Esophagus muscularis mucosa (tissue), 4 donors: ENCODE measurements at regions of chr15 and their contacts with region 1.

Region 1: DNA sequence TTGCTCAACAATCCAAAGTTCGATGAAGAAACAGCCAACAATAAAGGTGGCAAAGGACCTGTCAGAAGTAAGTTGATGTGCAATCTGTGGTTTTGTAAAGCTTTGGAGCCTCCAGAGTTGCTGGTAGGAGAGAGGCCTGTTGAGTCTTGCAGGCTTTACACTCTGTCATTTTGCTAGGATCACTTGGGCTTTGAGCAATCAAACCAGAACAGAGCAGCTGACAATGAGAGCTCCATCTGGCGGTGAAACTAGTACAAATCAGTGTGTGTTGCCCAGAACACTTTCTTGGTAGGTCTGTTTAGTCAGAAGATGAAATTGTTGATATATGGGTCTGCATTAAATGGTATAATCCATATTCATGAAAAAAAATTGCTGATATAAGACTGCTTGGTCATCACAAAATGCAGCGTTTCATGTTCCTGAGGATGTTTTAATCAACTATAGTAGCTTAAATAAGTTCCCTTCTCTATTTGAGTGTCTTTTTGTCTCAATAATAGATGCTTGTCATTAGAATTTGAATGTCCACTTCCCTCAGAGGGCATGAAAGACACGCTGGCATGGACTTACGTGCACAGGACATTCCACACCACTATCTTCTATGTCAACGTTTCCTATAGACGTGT is 25.7 kb downstream of the TMOD2 start:
- DNase-seq: peak; percentile 95
- H3K4me3 ChIP-seq: no peak overlapping the region
- H3K27ac ChIP-seq: no peak overlapping the region
- H3K4me1 ChIP-seq: peaks cover 0 to 9% (median 8%) of the 10 kb centered on the region in 4 donors
- H3K27me3 ChIP-seq: no peaks in the 10 kb centered on the region
- CTCF ChIP-seq: peak; percentile 59 to 75 (median 68)
- EP300 ChIP-seq: no peak
- POLR2A ChIP-seq: no peak

Region 2: DNA sequence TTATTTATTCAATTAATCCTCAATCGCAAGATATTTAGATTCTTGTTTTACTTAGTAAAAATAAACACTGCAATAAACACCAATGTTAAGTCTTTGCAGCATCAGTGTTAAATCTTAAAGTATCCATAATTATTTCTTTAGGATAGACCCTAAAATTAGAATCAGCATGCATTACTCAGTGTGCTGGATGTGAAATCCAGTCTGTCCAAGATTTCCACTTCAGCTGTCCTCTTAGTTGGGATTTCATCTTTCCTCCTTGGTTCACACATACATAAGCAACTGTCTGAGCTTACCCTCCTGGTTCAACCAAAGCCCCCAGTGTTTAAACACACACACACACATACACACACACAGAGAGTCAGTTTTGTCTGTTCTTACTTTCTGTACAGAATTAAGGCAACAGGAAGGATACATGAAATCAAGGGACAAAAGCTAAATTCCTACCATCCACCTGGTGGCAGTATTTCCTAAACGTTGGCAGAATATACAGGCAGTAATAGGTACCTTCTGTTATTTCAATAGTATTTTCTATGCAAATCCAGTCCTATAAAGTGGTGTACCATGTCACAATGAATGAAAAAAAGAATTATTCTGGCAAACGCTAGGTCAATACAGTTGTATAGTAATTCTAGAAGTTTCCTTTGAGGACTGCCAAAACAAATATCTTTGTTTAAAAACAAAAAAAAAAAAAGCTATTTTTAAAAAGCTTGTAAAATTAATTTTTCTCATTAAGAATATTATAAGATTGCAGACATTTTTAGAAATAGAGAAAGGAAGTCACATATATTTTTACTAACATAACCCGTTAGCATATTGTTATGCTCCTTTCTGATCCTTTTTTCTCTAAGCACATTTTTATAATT is 127.2 kb before region 1 on chr15:
- intact Hi-C with region 1: loop called (anchors 1 kb)
- DNase-seq: no peak
- H3K4me3 ChIP-seq: no peak overlapping the region
- H3K27ac ChIP-seq: no peak overlapping the region
- H3K4me1 ChIP-seq: no peaks in the 10 kb centered on the region
- H3K27me3 ChIP-seq: no peaks in the 10 kb centered on the region
- CTCF ChIP-seq: peak; percentile 73 to 78 (median 77)
- EP300 ChIP-seq: no peak
- POLR2A ChIP-seq: no peak

Region 3: GRCh38 chr15:51681303-51681963 is 95.6 kb before region 1 on chr15 and contains the start of gene SCG3:
- intact Hi-C with region 1: no loop called
- DNase-seq: no peak
- H3K4me3 ChIP-seq: peak within 1 kb of the TSS in 1 of 4 donors; percentile 7
- H3K27ac ChIP-seq: no peak within 1 kb of the TSS
- H3K4me1 ChIP-seq: peaks cover 3 to 8% (median 8%) of the 10 kb centered on the region in 4 donors
- H3K27me3 ChIP-seq: peaks cover 0 to 39% (median 5%) of the 10 kb centered on the region in 4 donors
- CTCF ChIP-seq: no peak
- EP300 ChIP-seq: no peak
- POLR2A ChIP-seq: no peak
- total RNA-seq, gene SCG3: 0.23 to 1.2 (median 0.43) TPM

Region 4: DNA sequence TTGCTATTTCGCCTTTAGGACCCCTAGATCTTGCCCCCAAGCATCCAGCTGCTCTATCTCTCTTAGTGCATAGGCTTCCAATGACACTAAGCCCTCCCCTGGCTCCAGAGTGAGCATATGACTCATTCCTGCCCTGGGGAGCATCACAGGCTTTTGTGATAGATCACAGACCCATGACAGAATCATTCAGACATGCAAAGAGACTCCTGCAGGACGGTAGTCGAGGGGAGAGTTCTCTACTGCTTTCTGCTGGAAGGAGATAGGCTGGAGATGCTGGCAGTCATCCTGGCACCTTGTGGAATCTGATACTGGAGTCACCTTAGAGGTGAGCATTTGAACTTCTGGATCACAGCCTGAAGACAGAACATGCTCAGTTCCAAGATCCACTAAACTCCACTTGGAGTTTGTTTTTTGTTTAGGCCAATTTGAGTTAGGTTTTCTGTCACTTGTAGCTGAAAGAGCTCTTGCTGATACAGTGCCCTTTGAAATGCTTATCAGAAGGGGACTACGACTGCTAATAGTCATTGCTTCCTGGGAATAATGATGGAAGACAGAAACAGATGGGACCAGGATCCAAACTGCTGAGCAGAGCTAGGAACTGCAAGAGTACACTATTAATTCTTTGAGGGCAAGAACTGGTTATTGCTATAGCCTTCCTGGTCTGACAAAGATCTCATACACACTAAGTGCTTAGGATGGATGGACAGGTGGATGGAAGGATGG is 50.6 kb before region 1 on chr15:
- intact Hi-C with region 1: loop called (anchors 10 kb)
- DNase-seq: no peak
- H3K4me3 ChIP-seq: no peak overlapping the region
- H3K27ac ChIP-seq: peak overlapping the region in 2 of 4 donors; percentile 19 to 48
- H3K4me1 ChIP-seq: peaks cover 25 to 43% (median 41%) of the 10 kb centered on the region in 4 donors
- H3K27me3 ChIP-seq: no peaks in the 10 kb centered on the region
- CTCF ChIP-seq: no peak
- EP300 ChIP-seq: no peak
- POLR2A ChIP-seq: no peak